Posterior vena cava (tissue), 2 donors: ENCODE measurements at regions of chr9 and their contacts with region 1.

Region 1: DNA sequence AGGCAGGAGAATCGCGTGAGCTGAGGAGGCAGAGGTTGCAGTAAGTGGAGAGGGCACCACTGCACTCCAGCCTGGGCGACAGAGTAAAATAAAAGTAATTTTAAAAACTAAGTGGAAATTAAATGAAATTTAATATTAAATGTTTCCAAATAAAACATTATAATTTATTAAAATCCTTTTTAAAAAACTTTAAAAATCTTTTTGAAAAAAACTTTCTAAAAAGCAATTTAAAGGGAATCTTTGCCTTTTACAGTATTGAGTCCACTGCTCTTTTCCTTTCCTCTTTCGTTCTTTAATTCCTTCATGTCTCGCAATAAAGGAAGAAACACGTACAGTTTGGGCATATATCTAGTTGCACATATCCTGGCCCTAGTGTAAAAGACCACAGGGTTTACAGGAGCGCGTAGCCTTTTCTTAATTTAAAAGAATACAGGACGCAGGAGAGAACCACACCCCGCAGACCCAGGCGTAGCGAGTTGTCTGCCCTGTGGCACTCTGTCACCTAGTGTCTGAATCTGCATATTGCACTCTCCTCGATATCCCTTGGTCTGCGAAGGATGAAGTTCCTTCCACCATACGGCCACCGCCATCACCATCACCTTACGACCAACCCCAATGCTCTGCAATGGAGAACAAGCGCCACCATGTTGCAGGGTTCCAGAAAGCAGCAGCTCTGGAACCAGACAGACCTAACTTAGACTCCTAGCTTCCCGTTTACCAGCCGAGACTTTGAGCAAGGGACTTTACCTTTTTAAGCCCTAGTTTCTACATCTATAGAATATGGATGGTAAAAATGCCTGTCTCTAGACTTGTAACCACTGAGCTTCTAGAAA is 77.6 kb upstream of the DMRT1 start:
- DNase-seq: peak; percentile 85

Region 2: GRCh38 chr9:385818-386398 is 378.0 kb before region 1 on chr9:
- intact Hi-C with region 1: loop called in 1 of 2 experiments (anchors 10 kb)
- DNase-seq: no peak

Region 3: DNA sequence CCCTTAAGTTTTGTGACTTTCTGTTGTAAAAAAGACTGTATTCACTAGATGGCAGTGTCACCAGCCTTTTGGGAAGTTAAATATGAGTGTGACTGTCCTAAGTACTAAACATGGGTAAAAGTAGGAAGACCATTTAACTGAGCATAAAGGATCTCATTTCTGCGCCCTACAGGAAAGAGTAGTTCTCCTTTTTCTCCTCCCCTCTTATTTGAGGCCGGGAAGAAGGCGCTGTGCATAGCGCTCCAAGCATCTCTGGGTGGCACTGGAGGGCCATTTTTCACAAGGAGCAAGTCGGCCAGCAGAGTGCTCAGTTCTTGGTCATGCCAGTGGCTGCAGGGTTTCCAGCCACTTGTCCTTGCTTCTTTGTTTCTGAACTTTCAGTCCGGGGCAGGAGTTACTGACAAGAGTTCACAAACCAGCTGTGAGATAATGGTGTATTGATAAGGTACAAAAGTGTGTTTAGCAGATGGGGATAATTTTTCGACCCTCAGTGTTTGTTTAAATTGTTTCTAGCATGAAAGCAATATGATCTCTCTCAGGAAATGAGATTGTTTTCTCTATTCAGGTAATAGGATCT is 150.0 kb before region 1 on chr9:
- intact Hi-C with region 1: loop called (anchors 5 kb)
- DNase-seq: peak; percentile 91

Region 4: GRCh38 chr9:738209-738915 is 25.5 kb before region 1 on chr9:
- intact Hi-C with region 1: no loop called
- DNase-seq: peak; percentile 88

Region 5: GRCh38 chr9:806285-807156 is 42.6 kb after region 1 on chr9:
- intact Hi-C with region 1: loop called in 1 of 2 experiments (anchors 5 kb)
- DNase-seq: peak; percentile 29